CD4-positive, alpha-beta T cell (primary cell): ENCODE measurements at regions of chr11 and their contacts with region 1.

Region 1: DNA sequence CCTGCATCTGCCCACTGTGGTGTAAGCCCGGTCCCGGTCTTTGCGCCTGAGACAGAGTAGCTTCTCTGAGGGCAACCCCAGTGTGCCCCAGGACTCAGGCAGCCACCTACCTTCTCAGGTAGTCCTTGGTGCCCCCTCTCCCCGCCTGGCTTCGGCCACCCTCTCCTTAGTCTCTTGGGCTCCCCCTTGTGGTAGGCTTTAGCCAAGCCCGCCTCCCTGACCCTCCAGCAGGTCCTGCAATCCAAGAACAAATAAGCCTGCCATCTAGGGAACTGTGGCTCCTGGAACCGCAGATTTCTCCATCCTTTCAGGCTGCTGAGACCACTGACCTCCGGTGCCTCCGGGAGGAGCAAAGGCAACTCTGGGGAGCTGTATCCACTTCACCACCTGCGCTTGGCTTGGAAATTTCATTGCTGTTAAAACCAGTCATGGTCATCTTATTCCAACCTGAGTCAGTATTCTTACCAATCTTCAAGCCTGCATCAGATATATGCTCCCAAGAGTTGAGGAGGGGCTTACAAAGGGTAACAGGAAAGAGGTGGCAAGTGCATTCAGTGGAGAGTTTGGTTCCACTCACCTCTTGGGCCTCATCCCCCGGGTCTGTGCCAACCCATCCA is 52.8 kb upstream of the TENM4 start:
- DNase-seq: peak in 8 of 14 experiments; percentile 2 to 45 (median 13)
- ATAC-seq: no peak
- H3K4me3 ChIP-seq: no peak overlapping the region
- H3K4me3 Mint-ChIP-seq: no peak overlapping the region
- H3K27ac ChIP-seq: no peak overlapping the region
- H3K27ac Mint-ChIP-seq: no peak overlapping the region
- H3K4me1 ChIP-seq: no peaks in the 10 kb centered on the region
- H3K4me1 Mint-ChIP-seq: no peaks in the 10 kb centered on the region
- H3K27me3 ChIP-seq: no peaks in the 10 kb centered on the region
- H3K27me3 Mint-ChIP-seq: peaks cover 5% of the 10 kb centered on the region
- CTCF ChIP-seq: peak; percentile 33

Region 2: DNA sequence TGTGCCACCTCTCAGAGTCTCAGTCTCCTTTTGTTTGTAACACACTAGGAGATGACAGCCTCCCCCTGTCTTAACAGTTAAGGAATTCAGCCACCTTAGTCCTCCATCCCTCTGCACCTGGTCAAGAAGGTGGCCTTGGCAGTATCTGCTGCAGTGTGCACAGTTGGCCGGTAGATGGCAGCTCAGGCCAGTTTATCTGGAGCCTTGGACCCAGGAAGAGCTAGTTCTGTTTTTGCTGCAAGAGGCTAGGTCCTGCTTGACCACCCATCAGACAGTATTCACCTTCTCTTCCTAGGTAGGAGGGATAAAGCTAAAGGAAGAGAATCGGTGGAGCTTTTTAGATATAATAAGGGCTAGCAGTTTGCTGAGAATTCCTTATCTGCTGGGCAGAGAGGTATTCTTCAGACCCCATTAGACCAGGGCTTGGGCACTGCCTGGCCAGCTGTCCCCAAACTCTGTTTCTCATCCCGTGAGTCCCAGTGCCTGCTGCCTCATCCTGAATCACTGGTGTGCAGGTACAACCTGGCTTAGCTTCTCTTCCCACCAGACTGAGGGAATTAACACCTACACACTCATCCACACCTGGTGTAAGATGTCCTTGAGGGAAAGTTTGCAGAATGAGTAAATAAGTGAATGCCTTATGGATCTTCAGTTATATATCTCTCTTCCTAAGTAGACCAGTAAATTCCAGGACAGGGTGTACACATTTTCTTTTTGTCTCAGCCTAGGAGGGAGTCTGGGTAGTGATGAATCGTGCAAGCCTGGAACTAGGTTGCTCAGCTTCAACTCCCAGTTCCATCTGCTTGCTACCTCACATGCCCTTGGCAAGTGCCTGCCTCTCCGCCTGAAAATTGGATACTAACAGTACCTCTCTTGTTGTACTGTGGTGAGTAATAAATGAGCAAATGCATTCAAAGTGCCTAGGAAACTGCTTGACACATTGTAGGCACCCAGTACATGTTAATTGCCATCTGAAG is 848.1 kb before region 1 on chr11:
- CTCF ChIA-PET with region 1: no interaction called
- POLR2A ChIA-PET with region 1: no interaction called
- intact Hi-C with region 1: loop called in 1 of 2 experiments (anchors 10 kb)
- DNase-seq: peak; percentile 19 to 72 (median 48)
- ATAC-seq: no peak
- H3K4me3 ChIP-seq: peak overlapping the region; percentile 20
- H3K4me3 Mint-ChIP-seq: no peak overlapping the region
- H3K27ac ChIP-seq: no peak overlapping the region
- H3K27ac Mint-ChIP-seq: no peak overlapping the region
- H3K4me1 ChIP-seq: peaks cover 2% of the 10 kb centered on the region
- H3K4me1 Mint-ChIP-seq: no peaks in the 10 kb centered on the region
- H3K27me3 ChIP-seq: no peaks in the 10 kb centered on the region
- H3K27me3 Mint-ChIP-seq: peaks cover 16% of the 10 kb centered on the region
- CTCF ChIP-seq: peak; percentile 89